ENCODE measurements at regions of chr10 and their contacts with region 1.

Region 1: DNA sequence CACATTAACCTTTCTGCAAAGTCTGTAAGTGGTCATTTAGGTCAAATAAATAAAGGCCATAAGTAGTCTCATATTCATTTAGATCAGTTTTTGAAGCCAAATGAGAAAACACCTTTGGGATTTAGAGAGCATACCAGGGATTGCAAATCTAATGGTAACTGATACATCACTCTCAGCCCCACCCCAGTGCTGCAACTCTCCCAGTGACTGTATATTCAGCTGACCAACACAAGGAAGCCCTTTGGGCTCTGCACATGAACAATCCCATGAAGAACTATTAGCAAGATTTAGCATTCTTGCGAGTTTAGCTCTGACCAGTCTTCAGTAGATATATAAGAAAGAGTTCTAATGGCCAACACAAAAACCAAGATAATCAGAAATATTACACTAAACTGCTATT is 252.3 kb downstream of the CSTF2T start:
- DNase-seq: no peak
- ATAC-seq: no peak
- H3K4me3 ChIP-seq: no peak overlapping the region
- H3K27ac ChIP-seq: no peak overlapping the region
- H3K4me1 ChIP-seq: no peaks in the 10 kb centered on the region
- H3K27me3 ChIP-seq: no peaks in the 10 kb centered on the region

Region 2: DNA sequence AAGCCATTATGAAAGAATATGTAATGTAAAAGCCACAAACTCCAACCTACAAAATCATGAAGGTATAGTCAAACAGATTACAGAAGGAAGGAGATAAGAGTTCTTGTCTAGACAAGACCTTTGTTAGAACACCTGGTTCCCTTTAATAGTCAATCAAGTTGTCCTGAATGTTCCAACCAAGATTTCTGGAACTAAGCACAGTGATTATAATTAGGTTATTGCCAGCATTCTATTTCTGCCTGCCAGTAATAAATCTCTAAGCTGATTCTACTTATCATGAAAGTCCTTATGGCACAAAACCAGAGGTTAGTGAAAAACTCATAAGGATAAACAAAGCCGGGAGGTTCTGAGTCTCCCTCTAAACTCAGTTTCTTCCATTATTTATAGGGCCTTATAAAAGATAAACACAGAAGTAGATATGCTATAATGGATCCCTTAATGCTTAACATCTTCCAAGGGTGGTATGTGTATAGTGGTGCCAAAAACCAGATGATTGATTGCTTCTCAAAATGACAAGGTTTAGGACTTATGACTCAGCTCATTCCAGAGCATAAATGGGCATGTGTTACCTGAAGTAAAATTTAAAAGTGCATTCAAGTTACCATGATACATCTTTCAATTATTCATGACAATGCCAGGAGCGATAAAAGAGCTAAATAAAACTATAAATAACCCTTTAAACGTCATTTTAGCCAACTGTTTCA is 15.1 kb after region 1 on chr10:
- intact Hi-C with region 1: loop called in 1 of 2 experiments (anchors 1 kb)
- DNase-seq: no peak
- ATAC-seq: no peak
- H3K4me3 ChIP-seq: no peak overlapping the region
- H3K27ac ChIP-seq: peak overlapping the region in 1 of 2 donors; percentile 12
- H3K4me1 ChIP-seq: peaks cover 2 to 9% of the 10 kb centered on the region in 2 donors
- H3K27me3 ChIP-seq: no peaks in the 10 kb centered on the region